T-cell (primary cell): ENCODE measurements at regions of chr11 and their contacts with region 1.

Region 1: DNA sequence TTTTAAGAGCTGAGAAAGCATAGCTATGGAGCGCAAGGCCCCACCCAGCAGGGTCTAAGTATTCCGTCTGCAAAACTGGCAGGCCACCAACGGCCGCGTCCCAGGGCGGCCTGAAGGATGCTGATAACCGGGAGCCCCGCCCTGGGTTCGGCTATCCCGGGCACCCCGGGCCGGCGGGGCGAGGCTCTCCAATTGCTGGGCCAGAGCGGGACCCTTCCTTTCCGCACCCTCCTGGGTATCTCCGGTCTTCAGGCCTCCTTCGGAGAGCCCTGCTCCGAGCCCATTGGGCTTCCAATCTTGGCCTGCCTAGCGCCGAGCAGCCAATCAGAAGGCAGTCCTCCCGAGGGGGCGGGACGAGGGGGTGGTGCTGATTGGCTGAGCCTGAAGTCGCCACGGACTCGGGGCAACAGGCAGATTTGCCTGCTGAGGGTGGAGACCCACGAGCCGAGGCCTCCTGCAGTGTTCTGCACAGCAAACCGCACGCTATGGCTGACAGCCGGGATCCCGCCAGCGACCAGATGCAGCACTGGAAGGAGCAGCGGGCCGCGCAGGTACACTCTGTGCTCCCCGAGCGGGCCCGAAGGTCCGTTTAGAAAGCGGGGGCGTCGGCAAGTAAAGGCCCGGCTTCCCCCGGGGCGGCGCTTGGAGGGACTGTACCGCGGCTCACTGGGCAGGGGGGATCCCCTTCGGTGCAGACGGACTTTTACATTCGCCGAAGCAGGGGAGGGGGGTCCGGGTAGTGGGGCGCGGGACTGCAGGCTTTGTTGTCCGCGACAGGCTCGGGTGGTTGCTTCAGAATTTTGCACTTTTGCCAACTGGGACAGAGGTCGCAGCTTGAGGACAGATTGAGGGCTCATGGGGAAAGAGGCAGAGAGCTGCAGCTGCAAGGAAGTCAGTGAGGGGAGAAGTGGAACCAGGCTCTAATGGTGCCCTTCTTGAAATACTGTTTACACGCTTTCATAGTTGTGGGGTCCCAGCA is at the start of gene CAT:
- DNase-seq: peak; percentile 92 to 99 (median 97)
- ATAC-seq: peak; percentile 96 to 98 (median 96)
- H3K4me3 ChIP-seq: peak within 1 kb of the TSS; percentile 85 to 94
- H3K4me3 Mint-ChIP-seq: peak within 1 kb of the TSS; percentile 96 to 99 (median 98)
- H3K27ac ChIP-seq: peak within 1 kb of the TSS; percentile 83
- H3K27ac Mint-ChIP-seq: peak within 1 kb of the TSS; percentile 90 to 95
- H3K4me1 ChIP-seq: peaks cover 17 to 20% of the 10 kb centered on the region in 2 experiments
- H3K4me1 Mint-ChIP-seq: peaks cover 34 to 47% (median 42%) of the 10 kb centered on the region in 3 donors
- H3K27me3 ChIP-seq: no peaks in the 10 kb centered on the region
- H3K27me3 Mint-ChIP-seq: no peaks in the 10 kb centered on the region
- total RNA-seq, gene CAT: 26.2 to 43.5 (median 37.6) TPM

Region 2: GRCh38 chr11:34552270-34552669 is 113.5 kb after region 1 on chr11:
- CTCF ChIA-PET with region 1: no interaction called
- POLR2A ChIA-PET with region 1: no interaction called
- DNase-seq: peak in 1 of 35 experiments; percentile 4
- ATAC-seq: no peak
- H3K4me3 ChIP-seq: no peak overlapping the region
- H3K4me3 Mint-ChIP-seq: no peak overlapping the region
- H3K27ac ChIP-seq: no peak overlapping the region
- H3K27ac Mint-ChIP-seq: no peak overlapping the region
- H3K4me1 ChIP-seq: no peaks in the 10 kb centered on the region
- H3K4me1 Mint-ChIP-seq: no peaks in the 10 kb centered on the region
- H3K27me3 ChIP-seq: peaks cover 0 to 11% of the 10 kb centered on the region in 2 experiments
- H3K27me3 Mint-ChIP-seq: peaks cover 8 to 12% of the 10 kb centered on the region in 2 donors

Region 3: GRCh38 chr11:35013514-35014233 is 574.9 kb after region 1 on chr11:
- CTCF ChIA-PET with region 1: no interaction called
- POLR2A ChIA-PET with region 1: interaction called in 1 of 2 experiments, 10 read pairs
- DNase-seq: peak in 19 of 35 experiments; percentile 5 to 75 (median 32)
- ATAC-seq: peak; percentile 38 to 64 (median 47)
- H3K4me3 ChIP-seq: no peak overlapping the region
- H3K4me3 Mint-ChIP-seq: peak overlapping the region; percentile 21 to 62 (median 22)
- H3K27ac ChIP-seq: peak overlapping the region; percentile 90
- H3K27ac Mint-ChIP-seq: peak overlapping the region; percentile 85 to 86
- H3K4me1 ChIP-seq: peaks cover 13 to 23% of the 10 kb centered on the region in 2 experiments
- H3K4me1 Mint-ChIP-seq: peaks cover 23 to 38% (median 32%) of the 10 kb centered on the region in 3 donors
- H3K27me3 ChIP-seq: no peaks in the 10 kb centered on the region
- H3K27me3 Mint-ChIP-seq: no peaks in the 10 kb centered on the region

Region 4: GRCh38 chr11:35126000-35126878 is 687.4 kb after region 1 on chr11:
- CTCF ChIA-PET with region 1: no interaction called
- POLR2A ChIA-PET with region 1: no interaction called
- DNase-seq: peak in 2 of 35 experiments; percentile 27 to 65
- ATAC-seq: peak; percentile 24 to 51 (median 34)
- H3K4me3 ChIP-seq: no peak overlapping the region
- H3K4me3 Mint-ChIP-seq: peak overlapping the region; percentile 45 to 67 (median 55)
- H3K27ac ChIP-seq: peak overlapping the region; percentile 52
- H3K27ac Mint-ChIP-seq: peak overlapping the region; percentile 79 to 88
- H3K4me1 ChIP-seq: peaks cover 30 to 34% of the 10 kb centered on the region in 2 experiments
- H3K4me1 Mint-ChIP-seq: peaks cover 58 to 64% (median 61%) of the 10 kb centered on the region in 3 donors
- H3K27me3 ChIP-seq: no peaks in the 10 kb centered on the region
- H3K27me3 Mint-ChIP-seq: no peaks in the 10 kb centered on the region